A673 (cell line): ENCODE measurements at regions of chr1 and their contacts with region 1.

Region 1: GRCh38 chr1:156319664-156320063 is 18.4 kb downstream of the CCT3 start:
- DNase-seq: peak; percentile 62
- H3K4me3 ChIP-seq: no peak overlapping the region
- H3K27ac ChIP-seq: no peak overlapping the region
- H3K4me1 ChIP-seq: no peaks in the 10 kb centered on the region
- H3K27me3 ChIP-seq: no peaks in the 10 kb centered on the region
- CTCF ChIP-seq: peak; percentile 68

Region 2: DNA sequence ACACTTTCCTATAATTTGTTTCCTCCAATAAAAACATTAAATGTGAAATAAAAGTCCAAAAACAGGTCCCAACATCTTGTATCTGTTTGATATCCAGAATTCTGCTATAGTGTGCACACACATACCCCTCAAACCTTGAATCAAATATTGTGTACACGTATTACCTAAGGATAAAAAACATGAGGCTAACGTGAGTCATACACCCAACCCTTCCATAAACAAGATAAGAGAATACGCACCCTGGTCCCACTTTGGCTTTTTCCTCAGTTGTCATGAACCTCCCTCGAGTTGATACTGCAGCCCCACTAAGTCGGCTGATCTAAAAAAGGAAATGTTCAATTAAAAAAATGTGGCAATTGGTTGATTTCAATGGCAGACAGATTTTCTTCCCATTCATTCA is 390.6 kb before region 1 on chr1:
- CTCF ChIA-PET with region 1: no interaction called
- POLR2A ChIA-PET with region 1: no interaction called
- intact Hi-C with region 1: loop called (anchors 10 kb)
- DNase-seq: no peak
- H3K4me3 ChIP-seq: no peak overlapping the region
- H3K27ac ChIP-seq: no peak overlapping the region
- H3K4me1 ChIP-seq: peaks cover 32% of the 10 kb centered on the region
- H3K27me3 ChIP-seq: no peaks in the 10 kb centered on the region
- CTCF ChIP-seq: no peak

Region 3: DNA sequence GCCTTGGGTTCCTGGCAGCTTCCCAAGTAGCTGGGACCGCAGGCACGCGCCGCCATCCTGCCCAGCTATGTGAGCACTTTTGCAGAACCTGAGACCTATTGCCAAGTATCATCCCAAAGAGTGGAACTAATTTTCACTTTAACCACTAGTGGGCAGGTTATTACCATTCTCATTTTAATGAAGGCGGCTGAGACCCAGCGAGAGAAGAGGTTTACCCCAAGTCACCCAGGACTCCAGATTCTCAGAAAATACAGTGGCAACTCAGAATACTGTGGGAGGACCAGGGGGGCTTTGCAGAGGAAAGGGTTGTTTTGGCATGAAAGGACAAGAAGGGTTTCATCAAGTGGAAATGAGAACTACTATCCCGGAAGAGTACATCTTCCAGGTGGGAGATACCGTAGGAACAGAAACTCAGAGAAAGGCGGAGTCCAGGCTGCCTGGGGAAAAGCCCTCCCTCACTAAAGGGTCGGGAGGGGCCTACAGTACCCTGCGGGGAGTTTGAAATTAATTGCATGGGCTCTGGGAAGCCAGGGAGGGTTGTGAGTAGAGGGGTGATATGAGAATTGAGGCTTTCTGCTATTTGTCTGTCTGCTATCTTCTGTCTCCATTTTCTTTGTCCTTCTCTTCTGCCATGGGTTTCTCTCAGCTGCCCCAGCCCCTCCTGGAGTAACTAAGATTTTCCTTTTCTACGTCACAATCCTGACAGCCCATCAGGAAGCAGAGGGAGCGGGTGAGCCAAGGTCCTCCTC is 173.5 kb before region 1 on chr1:
- CTCF ChIA-PET with region 1: no interaction called
- POLR2A ChIA-PET with region 1: no interaction called
- intact Hi-C with region 1: loop called (anchors 10 kb)
- DNase-seq: peak; percentile 93
- H3K4me3 ChIP-seq: peak overlapping the region; percentile 26
- H3K27ac ChIP-seq: no peak overlapping the region
- H3K4me1 ChIP-seq: peaks cover 10% of the 10 kb centered on the region
- H3K27me3 ChIP-seq: no peaks in the 10 kb centered on the region
- CTCF ChIP-seq: peak; percentile 78

Region 4: GRCh38 chr1:156346636-156347035 is 27.0 kb after region 1 on chr1:
- CTCF ChIA-PET with region 1: no interaction called
- POLR2A ChIA-PET with region 1: no interaction called
- intact Hi-C with region 1: no loop called
- DNase-seq: no peak
- H3K4me3 ChIP-seq: no peak overlapping the region
- H3K27ac ChIP-seq: no peak overlapping the region
- H3K4me1 ChIP-seq: no peaks in the 10 kb centered on the region
- H3K27me3 ChIP-seq: no peaks in the 10 kb centered on the region
- CTCF ChIP-seq: no peak